ENCODE measurements at regions of chr3 and their contacts with region 1.

Region 1: DNA sequence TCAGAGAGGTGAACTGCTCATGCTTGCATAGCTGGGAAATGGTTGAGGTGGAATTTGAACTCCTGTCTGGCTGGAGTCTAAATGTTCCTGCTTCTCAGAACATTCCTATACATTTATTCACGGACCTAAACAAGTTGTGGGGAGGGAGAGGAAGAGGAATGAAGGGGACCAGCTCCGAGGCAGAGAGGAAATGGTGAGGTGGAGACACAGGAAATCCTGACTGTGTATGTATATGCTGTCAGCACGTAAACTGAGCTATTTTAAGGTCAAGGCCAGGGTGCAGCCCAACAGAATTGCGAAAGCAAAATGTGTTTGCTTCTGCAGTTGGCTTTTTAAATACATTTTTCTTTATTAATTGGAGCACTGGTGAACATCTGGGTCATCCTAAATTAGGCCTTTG is 74.1 kb upstream of the POMGNT2 start:
- DNase-seq: peak; percentile 26
- ATAC-seq: peak; percentile 75
- H3K4me3 ChIP-seq: no peak overlapping the region
- H3K27ac ChIP-seq: peak overlapping the region; percentile 53
- H3K4me1 ChIP-seq: peaks cover 20% of the 10 kb centered on the region
- H3K27me3 ChIP-seq: no peaks in the 10 kb centered on the region
- CTCF ChIP-seq: no peak
- EP300 ChIP-seq: no peak
- POLR2A ChIP-seq: no peak
- RAD21 ChIP-seq: no peak

Region 2: GRCh38 chr3:42871592-42872196 is 308.3 kb before region 1 on chr3:
- CTCF ChIA-PET with region 1: no interaction called
- POLR2A ChIA-PET with region 1: no interaction called
- RAD21 ChIA-PET with region 1: no interaction called
- SMC1A ChIA-PET with region 1: no interaction called
- in situ Hi-C with region 1: no loop called
- intact Hi-C with region 1: no loop called
- DNase-seq: no peak
- ATAC-seq: no peak
- H3K4me3 ChIP-seq: no peak overlapping the region
- H3K27ac ChIP-seq: no peak overlapping the region
- H3K4me1 ChIP-seq: no peaks in the 10 kb centered on the region
- H3K27me3 ChIP-seq: no peaks in the 10 kb centered on the region
- CTCF ChIP-seq: no peak
- EP300 ChIP-seq: no peak
- POLR2A ChIP-seq: no peak
- RAD21 ChIP-seq: no peak

Region 3: GRCh38 chr3:42906070-42906847 is 273.8 kb before region 1 on chr3 and contains the start of gene ZNF662:
- CTCF ChIA-PET with region 1: no interaction called
- POLR2A ChIA-PET with region 1: no interaction called
- RAD21 ChIA-PET with region 1: no interaction called
- SMC1A ChIA-PET with region 1: no interaction called
- in situ Hi-C with region 1: no loop called
- intact Hi-C with region 1: no loop called
- DNase-seq: no peak
- ATAC-seq: no peak
- H3K4me3 ChIP-seq: no peak within 1 kb of the TSS
- H3K27ac ChIP-seq: no peak within 1 kb of the TSS
- H3K4me1 ChIP-seq: no peaks in the 10 kb centered on the region
- H3K27me3 ChIP-seq: peaks cover 5 to 10% of the 10 kb centered on the region in 2 experiments
- CTCF ChIP-seq: no peak
- EP300 ChIP-seq: no peak
- POLR2A ChIP-seq: no peak
- RAD21 ChIP-seq: no peak
- polyA plus RNA-seq, gene ZNF662: not detected

Region 4: GRCh38 chr3:43196721-43197120 is 16.7 kb after region 1 on chr3:
- CTCF ChIA-PET with region 1: no interaction called
- POLR2A ChIA-PET with region 1: no interaction called
- RAD21 ChIA-PET with region 1: no interaction called
- SMC1A ChIA-PET with region 1: no interaction called
- in situ Hi-C with region 1: no loop called
- intact Hi-C with region 1: no loop called
- DNase-seq: no peak
- ATAC-seq: no peak
- H3K4me3 ChIP-seq: no peak overlapping the region
- H3K27ac ChIP-seq: no peak overlapping the region
- H3K4me1 ChIP-seq: no peaks in the 10 kb centered on the region
- H3K27me3 ChIP-seq: no peaks in the 10 kb centered on the region; a peak in 2 of 4 replicates
- CTCF ChIP-seq: no peak
- EP300 ChIP-seq: no peak
- POLR2A ChIP-seq: no peak
- RAD21 ChIP-seq: no peak

Region 5: DNA sequence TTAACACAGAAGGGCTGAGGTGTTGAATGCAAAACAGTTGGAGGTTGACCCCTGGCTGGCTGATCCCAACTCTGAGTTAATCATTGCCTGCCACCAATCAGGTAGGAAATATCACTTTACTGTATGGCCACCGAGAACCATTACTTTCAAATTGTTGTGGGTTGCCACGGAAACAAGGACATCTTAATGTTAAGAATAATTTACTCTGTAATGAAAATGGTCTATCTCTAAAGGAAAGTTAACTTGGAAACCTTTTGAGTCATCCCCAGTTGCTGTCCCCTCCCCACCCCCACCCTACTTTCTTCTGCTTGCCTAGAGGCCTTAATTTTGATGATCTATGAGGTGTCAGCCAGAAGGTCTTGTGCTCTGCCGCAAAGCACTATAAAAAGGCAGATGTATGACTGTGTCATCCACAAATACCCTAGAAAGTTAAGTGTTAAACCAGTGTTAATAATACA is 27.6 kb after region 1 on chr3:
- CTCF ChIA-PET with region 1: no interaction called
- POLR2A ChIA-PET with region 1: interaction called, 3 read pairs
- RAD21 ChIA-PET with region 1: interaction called, 3 read pairs
- SMC1A ChIA-PET with region 1: interaction called, 16 read pairs
- in situ Hi-C with region 1: no loop called
- intact Hi-C with region 1: no loop called
- DNase-seq: peak; percentile 40
- ATAC-seq: peak; percentile 90
- H3K4me3 ChIP-seq: no peak overlapping the region
- H3K27ac ChIP-seq: no peak overlapping the region
- H3K4me1 ChIP-seq: no peaks in the 10 kb centered on the region
- H3K27me3 ChIP-seq: no peaks in the 10 kb centered on the region; a peak in 1 of 4 replicates
- CTCF ChIP-seq: no peak
- EP300 ChIP-seq: peak; percentile 51 to 80; a peak in 2 of 4 replicates
- POLR2A ChIP-seq: no peak
- RAD21 ChIP-seq: no peak

Region 6: DNA sequence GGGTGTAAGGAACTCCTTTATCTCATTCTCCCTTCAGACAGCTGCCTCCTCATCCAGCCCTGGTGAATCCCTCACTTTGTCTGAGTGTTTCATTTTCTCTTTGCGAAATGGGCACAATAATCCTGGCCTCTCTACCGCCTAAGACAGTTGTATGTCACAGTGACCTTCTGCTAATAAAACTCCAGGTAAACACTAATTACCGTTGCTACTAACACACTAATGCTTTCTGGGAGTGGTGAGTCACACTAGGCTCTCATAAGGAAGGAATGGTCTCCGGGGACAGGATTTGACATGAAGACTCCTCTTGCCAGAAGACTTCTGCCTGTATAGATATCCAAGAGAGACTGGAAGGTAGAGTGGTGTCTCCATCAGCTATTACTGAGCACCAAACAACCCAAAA is 34.6 kb after region 1 on chr3:
- CTCF ChIA-PET with region 1: interaction called, 7 read pairs
- POLR2A ChIA-PET with region 1: no interaction called
- RAD21 ChIA-PET with region 1: interaction called, 6 read pairs
- SMC1A ChIA-PET with region 1: interaction called, 16 read pairs
- in situ Hi-C with region 1: no loop called
- intact Hi-C with region 1: no loop called
- DNase-seq: no peak
- ATAC-seq: no peak
- H3K4me3 ChIP-seq: no peak overlapping the region
- H3K27ac ChIP-seq: no peak overlapping the region
- H3K4me1 ChIP-seq: no peaks in the 10 kb centered on the region
- H3K27me3 ChIP-seq: no peaks in the 10 kb centered on the region
- CTCF ChIP-seq: no peak
- EP300 ChIP-seq: no peak
- POLR2A ChIP-seq: no peak
- RAD21 ChIP-seq: no peak

Measured in GM12878 (cell line).